GM12878 (cell line): ENCODE measurements at regions of chr15 and their contacts with region 1.

Region 1: GRCh38 chr15:96345560-96346399 is 15.3 kb downstream of the NR2F2 start:
- DNase-seq: no peak
- ATAC-seq: peak; percentile 73
- H3K4me3 ChIP-seq: 0 out of 2 replicates have a peak overlapping the region, but pooled peaks have one; percentile 22
- H3K27ac ChIP-seq: no peak overlapping the region
- H3K4me1 ChIP-seq: no peaks in the 10 kb centered on the region
- H3K27me3 ChIP-seq: no peaks in the 10 kb centered on the region
- CTCF ChIP-seq: peak; percentile 59 to 79 (median 68)
- EP300 ChIP-seq: peak in 1 of 2 experiments; percentile 7; a peak in 1 of 4 replicates
- POLR2A ChIP-seq: no peak
- RAD21 ChIP-seq: peak; percentile 84

Region 2: DNA sequence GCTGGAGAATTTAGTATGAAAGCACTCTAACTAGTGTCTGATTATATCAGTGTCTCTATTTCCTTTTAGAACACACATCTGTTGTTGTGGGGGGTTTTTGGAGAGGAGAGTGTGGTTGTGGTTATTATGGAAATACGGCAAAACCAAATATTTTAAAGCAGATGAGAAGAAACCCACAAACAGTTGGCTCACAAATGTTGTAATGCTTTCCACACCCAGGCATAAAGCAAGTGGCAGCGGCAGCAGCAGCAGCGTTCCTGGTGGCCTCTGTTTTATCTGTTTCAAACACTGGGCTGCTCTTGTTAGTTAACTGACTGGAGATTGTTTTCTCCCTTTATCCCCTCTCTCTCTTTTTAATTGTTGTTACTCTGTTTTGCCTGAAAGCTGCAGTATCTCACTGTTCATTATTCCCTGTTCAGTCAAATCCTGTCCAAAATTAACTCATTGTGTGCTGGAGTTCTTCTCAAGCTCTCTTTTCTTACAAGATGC is 1060.8 kb before region 1 on chr15:
- CTCF ChIA-PET with region 1: interaction called, 3 read pairs
- POLR2A ChIA-PET with region 1: no interaction called
- RAD21 ChIA-PET with region 1: interaction called, 4 read pairs
- SMC1A ChIA-PET with region 1: no interaction called
- in situ Hi-C with region 1: no loop called
- intact Hi-C with region 1: loop called (anchors 5 kb)
- DNase-seq: no peak
- ATAC-seq: peak; percentile 68
- H3K4me3 ChIP-seq: no peak overlapping the region
- H3K27ac ChIP-seq: no peak overlapping the region
- H3K4me1 ChIP-seq: peaks cover 4% of the 10 kb centered on the region; the same call in 1 of the 2 replicates
- H3K27me3 ChIP-seq: no peaks in the 10 kb centered on the region
- CTCF ChIP-seq: peak in 1 of 3 experiments; percentile 4; a peak in 1 of 6 replicates
- EP300 ChIP-seq: peak in 1 of 2 experiments; percentile 45; a peak in 1 of 4 replicates
- POLR2A ChIP-seq: no peak
- RAD21 ChIP-seq: 0 out of 2 replicates have a peak, but pooled peaks have one; percentile 18

Region 3: DNA sequence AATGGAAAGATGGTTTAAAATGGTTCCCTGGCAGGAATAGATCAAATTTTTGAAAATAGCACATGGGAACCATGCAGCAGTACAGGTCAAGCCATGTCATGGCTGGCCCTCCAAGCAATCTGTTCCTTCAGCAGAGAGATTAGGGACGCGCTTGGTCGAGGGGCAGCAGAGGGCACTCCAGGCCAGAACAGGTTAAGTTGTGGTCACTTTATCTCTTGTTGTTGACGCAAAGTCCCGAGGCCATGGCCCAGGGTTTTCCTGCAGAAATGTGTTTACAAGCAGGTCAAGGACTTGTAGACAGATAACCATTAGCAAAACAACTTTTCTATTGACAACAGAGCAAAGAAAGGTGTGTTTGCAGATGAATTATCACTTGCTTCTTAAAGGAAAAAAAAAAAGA is 585.3 kb before region 1 on chr15:
- CTCF ChIA-PET with region 1: no interaction called
- POLR2A ChIA-PET with region 1: no interaction called
- RAD21 ChIA-PET with region 1: interaction called, 3 read pairs
- SMC1A ChIA-PET with region 1: interaction called, 4 read pairs
- in situ Hi-C with region 1: no loop called
- intact Hi-C with region 1: loop called (anchors 5 kb)
- DNase-seq: no peak
- ATAC-seq: peak; percentile 83
- H3K4me3 ChIP-seq: no peak overlapping the region
- H3K27ac ChIP-seq: no peak overlapping the region
- H3K4me1 ChIP-seq: no peaks in the 10 kb centered on the region
- H3K27me3 ChIP-seq: no peaks in the 10 kb centered on the region
- CTCF ChIP-seq: peak; percentile 11 to 28 (median 14); a peak in 2 of 6 replicates
- EP300 ChIP-seq: no peak
- POLR2A ChIP-seq: no peak
- RAD21 ChIP-seq: peak; percentile 46

Region 4: GRCh38 chr15:95912066-95912625 is 433.6 kb before region 1 on chr15:
- CTCF ChIA-PET with region 1: no interaction called
- POLR2A ChIA-PET with region 1: no interaction called
- RAD21 ChIA-PET with region 1: no interaction called
- SMC1A ChIA-PET with region 1: no interaction called
- in situ Hi-C with region 1: no loop called
- intact Hi-C with region 1: no loop called
- DNase-seq: no peak
- ATAC-seq: no peak
- H3K4me3 ChIP-seq: no peak overlapping the region
- H3K27ac ChIP-seq: no peak overlapping the region
- H3K4me1 ChIP-seq: no peaks in the 10 kb centered on the region
- H3K27me3 ChIP-seq: no peaks in the 10 kb centered on the region
- CTCF ChIP-seq: no peak
- EP300 ChIP-seq: no peak
- POLR2A ChIP-seq: no peak
- RAD21 ChIP-seq: no peak

Region 5: GRCh38 chr15:95922431-95922830 is 423.3 kb before region 1 on chr15:
- CTCF ChIA-PET with region 1: interaction called, 3 read pairs
- POLR2A ChIA-PET with region 1: no interaction called
- RAD21 ChIA-PET with region 1: interaction called, 8 read pairs
- SMC1A ChIA-PET with region 1: interaction called, 4 read pairs
- in situ Hi-C with region 1: no loop called
- intact Hi-C with region 1: loop called (anchors 1 kb)
- DNase-seq: peak; percentile 26
- ATAC-seq: peak; percentile 92
- H3K4me3 ChIP-seq: no peak overlapping the region
- H3K27ac ChIP-seq: no peak overlapping the region
- H3K4me1 ChIP-seq: no peaks in the 10 kb centered on the region
- H3K27me3 ChIP-seq: no peaks in the 10 kb centered on the region
- CTCF ChIP-seq: peak; percentile 27 to 61 (median 39); a peak in 4 of 6 replicates
- EP300 ChIP-seq: no peak
- POLR2A ChIP-seq: no peak
- RAD21 ChIP-seq: peak; percentile 83

Region 6: DNA sequence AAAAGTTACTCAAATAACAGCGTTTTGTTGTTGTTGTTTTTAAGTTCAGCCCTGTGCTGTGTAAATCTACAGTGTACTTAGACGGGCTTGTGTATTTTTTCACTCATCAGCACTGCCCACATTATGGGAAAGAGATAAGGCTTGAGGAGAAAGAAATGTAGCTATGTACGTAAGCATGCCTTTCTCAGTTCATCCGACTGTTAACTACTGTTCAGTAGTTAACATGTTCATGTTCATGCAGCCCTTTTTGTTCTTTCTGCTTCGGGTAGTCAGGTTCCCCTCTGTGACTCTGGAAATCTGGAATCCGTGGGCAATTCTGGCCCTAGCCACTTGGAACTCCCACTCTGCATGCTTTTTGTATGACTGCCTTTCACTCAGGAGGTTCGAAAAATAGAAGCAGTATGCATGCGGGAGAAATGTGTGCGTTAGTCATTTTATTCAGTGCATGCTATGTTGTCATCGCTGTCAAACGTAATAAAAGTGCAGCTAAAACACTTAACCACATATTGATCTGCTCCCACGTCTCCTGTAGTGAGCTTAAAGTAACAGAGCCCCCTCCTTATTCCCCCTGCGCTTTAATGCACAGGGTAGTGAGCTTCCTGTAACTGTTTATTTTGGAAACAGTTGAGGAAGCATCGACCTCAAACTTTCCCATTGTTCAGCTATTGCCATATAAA is 298.4 kb before region 1 on chr15:
- CTCF ChIA-PET with region 1: interaction called, 4 read pairs
- POLR2A ChIA-PET with region 1: no interaction called
- RAD21 ChIA-PET with region 1: interaction called, 3 read pairs
- SMC1A ChIA-PET with region 1: no interaction called
- in situ Hi-C with region 1: no loop called
- intact Hi-C with region 1: loop called (anchors 5 kb)
- DNase-seq: no peak
- ATAC-seq: peak; percentile 42
- H3K4me3 ChIP-seq: no peak overlapping the region
- H3K27ac ChIP-seq: no peak overlapping the region
- H3K4me1 ChIP-seq: peaks cover 23% of the 10 kb centered on the region
- H3K27me3 ChIP-seq: no peaks in the 10 kb centered on the region
- CTCF ChIP-seq: no peak
- EP300 ChIP-seq: no peak
- POLR2A ChIP-seq: no peak
- RAD21 ChIP-seq: no peak

Region 7: DNA sequence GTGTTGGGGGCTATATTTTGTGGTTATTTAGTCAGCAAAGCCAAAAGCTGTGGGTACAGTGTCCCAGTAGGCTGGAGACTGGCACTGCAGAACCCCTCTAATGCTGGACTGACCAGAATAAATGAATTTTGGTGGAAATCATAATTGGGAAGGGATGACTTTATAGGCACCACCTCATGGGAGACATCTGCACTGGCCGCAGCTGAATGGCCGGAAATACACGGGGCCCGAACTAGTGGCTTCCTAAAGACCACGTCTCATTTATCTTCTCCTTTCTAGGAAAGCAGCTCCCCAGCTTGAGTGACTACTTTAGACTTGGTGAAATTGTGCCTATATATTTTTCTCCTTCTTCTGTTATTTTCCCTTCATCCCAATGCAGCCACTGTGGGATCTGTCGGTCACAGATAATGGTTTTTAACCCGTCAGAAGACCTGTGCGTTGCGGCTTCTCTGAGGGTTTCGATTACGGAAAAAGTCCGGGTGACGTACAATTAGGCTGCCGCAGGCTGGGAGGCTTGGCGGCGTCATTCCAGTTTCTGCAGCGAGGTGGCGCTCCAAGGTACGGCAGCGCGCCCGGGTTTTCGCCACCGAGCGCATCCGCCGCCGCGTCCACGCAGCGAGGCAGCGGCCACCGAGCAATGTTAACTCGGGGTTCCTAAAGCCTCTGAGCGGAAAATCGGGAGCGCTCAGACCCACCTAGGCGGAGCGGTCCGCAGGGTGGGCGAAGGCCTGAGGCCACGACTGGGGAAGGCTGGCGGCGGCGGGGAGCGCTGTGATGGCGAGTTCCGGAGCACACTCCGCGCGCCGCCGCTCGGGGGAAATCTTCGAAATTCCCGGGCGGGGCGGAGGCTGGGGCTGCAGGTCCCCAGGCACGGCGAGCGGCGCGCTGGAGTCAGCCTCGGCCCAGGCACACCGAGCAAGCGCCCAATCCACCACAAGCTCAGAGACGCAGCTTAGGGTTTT is 11.0 kb after region 1 on chr15:
- CTCF ChIA-PET with region 1: interaction called, 22 read pairs
- POLR2A ChIA-PET with region 1: interaction called, 9 read pairs
- RAD21 ChIA-PET with region 1: interaction called, 52 read pairs
- SMC1A ChIA-PET with region 1: interaction called, 20 read pairs
- in situ Hi-C with region 1: no loop called
- intact Hi-C with region 1: no loop called
- DNase-seq: peak; percentile 47
- ATAC-seq: peak; percentile 57
- H3K4me3 ChIP-seq: peak overlapping the region; percentile 60; the same call in 1 of the 2 replicates
- H3K27ac ChIP-seq: no peak overlapping the region; the same call in 1 of the 2 replicates
- H3K4me1 ChIP-seq: peaks cover 6% of the 10 kb centered on the region; the same call in 1 of the 2 replicates
- H3K27me3 ChIP-seq: peaks cover 2 to 18% of the 10 kb centered on the region in 2 experiments
- CTCF ChIP-seq: peak; percentile 86 to 95 (median 92)
- EP300 ChIP-seq: peak; percentile 55 to 81; a peak in 3 of 4 replicates
- POLR2A ChIP-seq: no peak
- RAD21 ChIP-seq: peak; percentile 50